Spleen (tissue), 13 donors: ENCODE measurements at regions of chr12 and their contacts with region 1.

Region 1: DNA sequence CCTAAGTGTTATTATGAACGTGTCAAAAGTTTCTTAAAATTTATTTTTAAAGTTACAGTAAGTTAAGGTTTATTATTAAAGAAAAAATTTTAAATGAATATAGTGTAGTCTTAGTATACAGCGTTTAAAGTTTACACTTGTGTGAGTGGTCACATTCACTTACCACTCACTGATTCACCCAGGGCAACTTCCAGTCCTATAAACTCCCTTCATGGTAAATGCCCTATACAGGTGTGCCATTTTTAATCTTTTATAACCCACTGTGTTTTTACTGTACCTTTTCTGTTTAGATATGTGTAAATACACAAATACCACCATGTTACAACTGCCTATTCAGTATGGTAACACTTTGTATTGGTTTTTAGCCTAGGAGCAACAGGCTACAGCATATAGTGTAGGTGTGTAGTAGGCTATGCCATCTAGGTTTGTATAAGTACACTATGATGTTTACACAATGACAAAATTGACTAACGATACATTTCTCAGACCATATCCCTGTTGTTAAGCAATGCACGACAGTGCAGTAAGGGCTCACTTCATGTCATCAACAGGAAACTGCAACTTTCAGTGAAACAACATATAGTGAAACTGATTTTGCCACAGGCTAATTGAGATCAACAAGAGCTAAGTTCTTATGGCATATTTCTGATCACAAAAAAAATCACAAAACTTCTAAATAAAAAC is 112.0 kb upstream of the TMCC3 start:
- DNase-seq: no peak
- H3K4me3 ChIP-seq: peak overlapping the region in 1 of 8 donors; percentile 7
- H3K27ac ChIP-seq: peak overlapping the region in 3 of 8 donors; percentile 54 to 66 (median 63)
- H3K4me1 ChIP-seq: peaks cover 0 to 40% (median 25%) of the 10 kb centered on the region in 6 donors
- H3K27me3 ChIP-seq: no peaks in the 10 kb centered on the region
- CTCF ChIP-seq: no peak
- POLR2A ChIP-seq: no peak

Region 2: GRCh38 chr12:94545935-94546771 is 216.2 kb before region 1 on chr12:
- intact Hi-C with region 1: loop called (anchors 10 kb)
- DNase-seq: no peak
- H3K4me3 ChIP-seq: no peak overlapping the region
- H3K27ac ChIP-seq: no peak overlapping the region
- H3K4me1 ChIP-seq: no peaks in the 10 kb centered on the region
- H3K27me3 ChIP-seq: no peaks in the 10 kb centered on the region
- CTCF ChIP-seq: peak; percentile 16 to 76 (median 57)
- POLR2A ChIP-seq: no peak

Region 3: GRCh38 chr12:94689002-94689645 is 73.3 kb before region 1 on chr12:
- intact Hi-C with region 1: no loop called
- DNase-seq: no peak
- H3K4me3 ChIP-seq: no peak overlapping the region
- H3K27ac ChIP-seq: peak overlapping the region in 2 of 8 donors; percentile 7 to 8
- H3K4me1 ChIP-seq: peaks cover 0 to 30% (median 15%) of the 10 kb centered on the region in 6 donors
- H3K27me3 ChIP-seq: no peaks in the 10 kb centered on the region
- CTCF ChIP-seq: no peak
- POLR2A ChIP-seq: no peak